GM10248 (cell line): ENCODE measurements at regions of chr2 and their contacts with region 1.

Region 1: GRCh38 chr2:144449028-144449406 is 70.9 kb downstream of the ZEB2 start:
- DNase-seq: peak; percentile 16
- CTCF ChIP-seq: peak; percentile 16

Region 2: DNA sequence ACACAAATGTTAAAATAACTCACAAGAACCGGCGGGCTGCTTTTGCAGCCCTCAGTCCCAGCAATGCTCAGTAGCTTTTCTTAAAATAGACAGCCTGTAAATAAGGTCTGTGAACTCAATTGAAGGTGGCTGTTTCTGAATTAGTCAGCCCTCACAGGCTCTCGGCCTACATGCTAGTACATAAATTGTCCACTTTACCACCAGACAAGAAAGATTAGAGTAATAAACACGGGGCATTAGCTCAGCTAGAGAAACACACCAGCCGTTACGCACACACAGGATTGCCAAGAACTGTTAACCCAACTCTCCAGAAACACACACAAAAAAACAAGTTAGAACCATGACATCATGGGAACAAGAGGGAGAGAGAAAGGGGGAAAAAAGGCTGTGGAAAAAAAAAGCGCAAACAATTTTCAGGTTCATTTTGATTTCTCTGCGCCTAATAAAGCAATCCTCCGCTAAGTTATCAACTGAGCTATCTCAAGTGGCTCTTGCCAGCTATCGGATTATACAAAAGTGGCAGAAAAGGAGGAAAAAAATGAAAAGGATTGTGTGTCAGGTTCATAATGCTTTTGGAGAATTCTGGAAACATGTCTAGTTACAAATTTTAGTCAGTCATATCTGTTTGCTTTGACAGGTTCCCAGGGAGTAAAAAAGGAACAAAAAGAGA is 18.2 kb before region 1 on chr2:
- CTCF ChIA-PET with region 1: interaction called, 11 read pairs
- POLR2A ChIA-PET with region 1: no interaction called
- DNase-seq: peak; percentile 32
- CTCF ChIP-seq: no peak

Region 3: DNA sequence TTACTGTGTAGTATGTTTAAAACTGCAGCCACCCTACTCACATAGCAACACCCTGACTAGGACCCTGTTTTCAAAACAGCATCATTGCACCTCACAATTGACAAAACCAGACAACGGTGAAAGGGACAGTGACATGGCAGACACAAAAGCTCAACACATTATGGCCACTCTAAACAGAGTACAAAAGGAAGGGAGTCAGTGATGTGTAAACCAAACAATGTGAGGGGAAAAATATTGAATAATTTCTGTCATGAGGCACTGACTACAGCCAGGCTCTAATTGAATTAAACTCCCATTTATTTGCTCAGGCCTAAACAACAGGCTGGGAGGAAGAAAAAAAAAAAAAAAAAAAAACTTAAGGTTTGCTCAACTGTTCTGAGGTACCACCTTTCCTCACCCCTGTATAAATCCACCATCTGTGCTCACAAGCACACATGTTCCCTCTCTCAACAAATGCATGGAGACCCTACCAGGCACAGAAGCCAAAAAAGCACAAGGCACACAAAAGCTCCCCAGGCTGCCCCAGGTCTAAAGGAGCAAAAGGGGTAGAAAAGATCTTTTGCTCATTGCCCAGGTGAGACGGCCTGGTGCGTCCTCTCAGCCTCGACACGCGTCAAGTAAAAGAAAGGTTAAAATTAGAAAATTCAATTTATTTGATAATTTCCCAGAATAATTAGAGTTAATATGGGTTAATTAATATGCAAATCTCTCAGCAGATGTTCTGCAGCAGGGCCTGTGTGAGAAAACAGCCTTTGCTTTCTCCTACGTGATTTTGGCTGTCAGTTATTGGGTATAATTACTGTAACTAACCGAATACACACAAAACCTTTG is 10.0 kb before region 1 on chr2:
- CTCF ChIA-PET with region 1: interaction called, 30 read pairs
- POLR2A ChIA-PET with region 1: no interaction called
- DNase-seq: no peak
- CTCF ChIP-seq: no peak

Region 4: DNA sequence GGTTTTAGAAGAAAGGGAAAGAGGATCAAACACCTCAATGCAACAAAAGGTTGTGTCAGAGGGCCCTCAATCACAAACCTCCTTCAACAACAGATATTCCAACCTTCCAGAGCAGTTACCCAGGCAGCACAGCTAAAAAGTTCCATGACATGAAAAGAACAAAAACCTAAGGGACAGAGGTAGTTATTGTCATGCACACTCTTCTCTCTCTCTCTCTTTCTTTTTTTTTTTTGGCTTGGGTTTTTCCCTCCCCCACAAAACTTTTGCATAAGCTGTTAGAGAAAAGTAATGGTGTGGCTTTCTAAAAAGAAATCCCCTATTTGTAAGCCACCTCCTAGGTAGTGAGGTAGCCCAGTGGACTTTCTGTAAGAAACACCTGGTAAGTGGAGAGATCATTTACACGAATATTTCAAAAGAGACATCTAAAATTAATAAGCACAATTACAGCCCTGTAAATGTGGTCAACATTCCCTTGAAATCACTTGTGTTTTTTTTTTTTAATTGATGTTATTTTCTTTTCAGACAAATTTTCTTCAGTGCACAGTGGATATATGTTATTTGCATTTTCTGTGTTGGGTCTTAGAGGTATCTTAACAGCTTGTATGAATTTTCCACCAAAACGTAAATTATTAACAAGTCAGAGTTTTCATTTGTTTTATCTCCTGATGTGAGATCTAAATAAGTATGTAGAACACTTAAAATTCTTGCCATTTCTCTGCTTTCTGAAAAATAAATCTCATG is 22.5 kb after region 1 on chr2:
- CTCF ChIA-PET with region 1: interaction called, 11 read pairs
- POLR2A ChIA-PET with region 1: no interaction called
- DNase-seq: peak; percentile 16
- CTCF ChIP-seq: no peak